ENCODE measurements at regions of chr2 and their contacts with region 1.

Region 1: DNA sequence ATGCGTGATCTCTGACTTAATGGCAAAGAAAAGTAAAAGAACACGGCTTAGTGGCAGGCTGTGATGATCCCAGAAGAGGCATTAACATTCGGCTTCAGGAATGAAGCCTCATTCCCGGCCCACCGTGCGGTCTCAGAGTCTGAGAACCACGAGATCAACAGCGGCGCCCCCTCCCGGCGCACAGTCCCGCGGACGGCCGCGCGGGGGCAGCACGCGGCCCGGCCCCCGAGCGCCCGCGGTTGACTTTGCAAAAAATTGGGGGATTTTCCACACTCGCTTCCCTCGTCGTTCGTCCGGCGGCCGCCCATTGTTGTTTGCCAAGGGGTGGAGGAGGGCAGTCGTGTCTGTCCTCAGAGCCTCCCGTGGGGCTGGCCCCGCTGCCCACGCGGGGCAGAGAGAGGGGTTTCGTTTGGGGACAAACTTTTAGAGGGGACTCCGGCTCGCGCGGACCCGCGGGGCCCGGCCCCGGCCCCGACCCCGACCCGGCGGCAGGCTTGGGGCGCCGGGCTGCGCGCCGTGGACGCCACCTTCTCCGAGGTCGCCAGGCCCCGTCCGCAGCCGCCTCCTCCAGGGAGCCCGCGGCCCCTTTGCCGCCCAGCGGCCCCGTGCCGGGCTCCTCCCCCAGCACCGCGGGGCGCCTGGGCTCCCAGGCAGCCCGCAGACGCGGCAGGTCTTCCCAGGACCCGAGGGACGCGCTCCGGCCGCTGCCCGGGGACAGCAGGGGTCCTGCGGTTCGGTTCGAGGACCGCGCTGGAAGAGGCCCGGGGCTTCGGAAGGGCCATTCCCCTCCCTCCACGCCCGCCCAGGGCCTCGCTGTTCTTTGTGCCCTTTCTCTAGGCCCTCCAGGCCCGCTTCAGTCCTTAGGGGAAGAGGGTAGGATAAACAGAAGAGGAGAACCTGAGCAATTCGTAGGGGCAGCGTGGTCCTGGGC is 3.4 kb upstream of the HS6ST1 start:
- DNase-seq: peak; percentile 71
- H3K4me3 Mint-ChIP-seq: peak overlapping the region; percentile 51
- H3K27ac Mint-ChIP-seq: no peak overlapping the region
- H3K4me1 Mint-ChIP-seq: peaks cover 8% of the 10 kb centered on the region
- H3K27me3 Mint-ChIP-seq: peaks cover 12% of the 10 kb centered on the region

Region 2: GRCh38 chr2:128187032-128187654 is 134.9 kb before region 1 on chr2:
- intact Hi-C with region 1: no loop called
- DNase-seq: no peak
- H3K4me3 Mint-ChIP-seq: no peak overlapping the region
- H3K27ac Mint-ChIP-seq: no peak overlapping the region
- H3K4me1 Mint-ChIP-seq: peaks cover 3% of the 10 kb centered on the region
- H3K27me3 Mint-ChIP-seq: no peaks in the 10 kb centered on the region

Region 3: GRCh38 chr2:128232965-128233789 is 88.9 kb before region 1 on chr2:
- intact Hi-C with region 1: loop called (anchors 5 kb)
- DNase-seq: peak; percentile 77
- H3K4me3 Mint-ChIP-seq: peak overlapping the region; percentile 70
- H3K27ac Mint-ChIP-seq: no peak overlapping the region
- H3K4me1 Mint-ChIP-seq: peaks cover 3% of the 10 kb centered on the region
- H3K27me3 Mint-ChIP-seq: peaks cover 11% of the 10 kb centered on the region

Region 4: GRCh38 chr2:128280158-128280871 is 41.7 kb before region 1 on chr2:
- intact Hi-C with region 1: no loop called
- DNase-seq: no peak
- H3K4me3 Mint-ChIP-seq: no peak overlapping the region
- H3K27ac Mint-ChIP-seq: no peak overlapping the region
- H3K4me1 Mint-ChIP-seq: no peaks in the 10 kb centered on the region
- H3K27me3 Mint-ChIP-seq: no peaks in the 10 kb centered on the region

Region 5: DNA sequence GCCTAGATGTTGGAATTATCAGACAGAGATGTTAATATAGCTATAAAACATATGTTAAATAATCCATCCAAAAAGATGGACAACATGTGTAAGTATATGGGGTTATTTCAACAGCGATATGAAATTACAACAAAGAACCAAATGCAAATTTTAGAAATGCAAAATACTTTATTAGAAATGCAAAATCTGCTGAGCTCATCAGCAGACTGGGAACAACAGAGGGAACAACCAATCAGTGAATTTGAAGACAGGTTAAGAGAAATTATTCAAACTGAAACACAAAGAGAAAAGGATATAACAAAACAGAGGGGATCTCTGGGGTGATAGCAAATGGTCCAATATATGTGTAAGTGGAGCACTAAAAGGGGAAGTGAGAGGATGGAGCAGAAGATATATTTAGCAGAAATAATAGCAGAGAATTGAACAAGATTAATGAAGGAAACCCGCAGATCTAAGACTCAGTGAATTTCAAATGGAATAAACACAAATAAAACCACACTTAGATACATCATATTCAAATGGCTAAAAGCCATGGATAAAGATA is 10.1 kb after region 1 on chr2:
- intact Hi-C with region 1: no loop called
- DNase-seq: no peak
- H3K4me3 Mint-ChIP-seq: no peak overlapping the region
- H3K27ac Mint-ChIP-seq: no peak overlapping the region
- H3K4me1 Mint-ChIP-seq: peaks cover 7% of the 10 kb centered on the region
- H3K27me3 Mint-ChIP-seq: peaks cover 6% of the 10 kb centered on the region

Region 6: GRCh38 chr2:128623776-128624424 is 301.9 kb after region 1 on chr2:
- intact Hi-C with region 1: loop called (anchors 5 kb)
- DNase-seq: peak; percentile 33
- H3K4me3 Mint-ChIP-seq: peak overlapping the region; percentile 17
- H3K27ac Mint-ChIP-seq: peak overlapping the region; percentile 19
- H3K4me1 Mint-ChIP-seq: peaks cover 21% of the 10 kb centered on the region
- H3K27me3 Mint-ChIP-seq: peaks cover 53% of the 10 kb centered on the region

Region 7: DNA sequence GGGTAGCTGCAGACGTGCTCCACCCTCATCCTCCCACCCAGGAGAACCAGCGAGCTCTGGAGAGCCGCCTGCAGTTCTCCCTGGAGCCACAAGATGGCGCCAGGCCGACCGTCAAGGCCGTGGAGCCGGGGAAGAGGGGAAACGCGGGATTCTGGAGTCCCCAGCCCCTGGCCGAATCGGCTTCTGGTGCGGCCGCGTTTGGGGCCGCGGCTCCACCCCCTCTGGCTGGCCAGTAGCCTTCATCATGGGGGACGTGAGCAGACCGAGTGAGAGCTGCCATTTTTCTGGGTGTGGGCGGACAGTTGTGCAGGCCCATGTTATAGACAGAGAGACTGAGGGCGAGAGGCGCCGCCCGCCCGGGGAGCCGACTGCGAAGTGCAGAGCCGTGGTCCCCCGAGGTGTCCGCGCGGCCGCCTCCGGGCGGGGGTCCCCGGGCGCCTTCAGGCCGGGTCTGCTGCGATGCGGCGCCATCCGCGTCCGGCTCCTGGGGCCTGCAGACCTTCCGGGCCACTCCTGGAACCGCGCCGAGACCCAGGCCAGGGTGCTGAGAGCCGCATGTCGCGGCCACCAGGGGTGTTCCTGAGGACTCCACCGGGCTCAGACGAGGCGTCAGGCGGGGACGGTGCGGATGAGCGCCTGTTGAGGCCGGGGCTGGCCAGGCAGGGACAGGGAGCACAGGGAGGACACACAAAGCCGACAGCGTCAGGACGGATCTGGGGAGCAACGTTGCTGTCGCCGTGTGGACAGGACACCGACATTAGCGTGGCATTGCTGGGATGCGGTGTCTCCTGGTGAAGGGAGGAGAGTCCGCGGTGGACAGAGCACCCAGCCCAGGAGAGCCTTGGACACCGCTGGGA is 414.9 kb after region 1 on chr2:
- intact Hi-C with region 1: loop called (anchors 5 kb)
- DNase-seq: peak; percentile 57
- H3K4me3 Mint-ChIP-seq: peak overlapping the region; percentile 66
- H3K27ac Mint-ChIP-seq: no peak overlapping the region
- H3K4me1 Mint-ChIP-seq: peaks cover 16% of the 10 kb centered on the region
- H3K27me3 Mint-ChIP-seq: peaks cover 54% of the 10 kb centered on the region